Activated T-helper 2 cell treated with anti-CD3 and anti-CD28 coated beads, Interferon-gamma antibody, Interleukin-2, Interleukin-4, amounts not matched to agents 10 μg/mL and 5 μg/mL and 100 μg/mL, durations not matched to agents 14 hours and 24 hours and 36 hours (primary cell): ENCODE measurements at regions of chr19 and their contacts with region 1.

Region 1: DNA sequence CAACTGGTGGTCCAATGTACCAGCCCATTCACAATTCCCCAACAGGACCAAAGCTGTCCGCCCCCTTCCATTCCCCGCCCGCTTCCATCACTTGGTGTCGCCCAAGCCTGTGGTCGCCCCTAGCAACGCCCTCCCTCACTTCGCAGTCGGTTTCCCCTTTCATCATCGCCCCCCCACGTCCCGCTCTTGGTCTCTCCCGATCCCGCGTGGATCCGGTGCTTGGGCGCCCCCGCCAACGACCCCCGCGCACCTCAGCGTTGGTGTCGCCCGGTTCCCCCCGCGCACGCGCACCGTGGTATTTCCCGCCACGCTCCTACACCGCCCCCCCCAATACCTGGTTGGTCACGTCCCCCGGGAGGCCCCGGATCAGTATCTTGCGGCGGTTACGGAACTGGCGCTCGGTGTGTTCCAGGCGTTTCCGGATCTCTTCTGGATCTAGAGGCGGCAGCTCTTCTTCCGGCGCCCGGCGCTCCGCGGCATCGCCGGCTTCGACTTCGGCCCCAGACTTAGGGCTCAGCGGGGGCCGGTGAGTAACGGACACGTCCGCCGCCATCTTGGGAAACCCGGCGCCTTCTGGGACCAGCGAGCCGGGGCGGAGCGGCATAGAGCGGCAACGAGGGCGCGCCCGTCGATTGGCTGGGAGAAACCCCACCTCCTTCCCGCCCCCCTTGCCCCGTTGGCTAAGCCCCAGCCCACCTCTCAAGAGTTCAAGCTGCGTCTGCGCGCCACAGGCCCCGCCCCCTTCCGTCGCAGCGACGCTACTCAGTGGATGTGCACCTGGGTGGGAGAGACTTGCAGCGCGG is at the start of gene RAVER1:
- DNase-seq: peak; percentile 95
- H3K4me3 Mint-ChIP-seq: peak within 1 kb of the TSS; percentile 90
- H3K27ac Mint-ChIP-seq: peak within 1 kb of the TSS; percentile 94
- H3K4me1 Mint-ChIP-seq: peaks cover 12% of the 10 kb centered on the region
- H3K27me3 Mint-ChIP-seq: no peaks in the 10 kb centered on the region
- total RNA-seq, gene RAVER1: 90.3 and 91.1 TPM in 2 replicates

Region 2: GRCh38 chr19:10206226-10206885 is 126.8 kb before region 1 on chr19:
- intact Hi-C with region 1: no loop called
- DNase-seq: no peak
- H3K4me3 Mint-ChIP-seq: no peak overlapping the region
- H3K27ac Mint-ChIP-seq: no peak overlapping the region
- H3K4me1 Mint-ChIP-seq: peaks cover 2% of the 10 kb centered on the region
- H3K27me3 Mint-ChIP-seq: peaks cover 2% of the 10 kb centered on the region

Region 3: GRCh38 chr19:10245189-10245939 is 87.8 kb before region 1 on chr19:
- intact Hi-C with region 1: no loop called
- DNase-seq: no peak
- H3K4me3 Mint-ChIP-seq: no peak overlapping the region
- H3K27ac Mint-ChIP-seq: no peak overlapping the region
- H3K4me1 Mint-ChIP-seq: no peaks in the 10 kb centered on the region
- H3K27me3 Mint-ChIP-seq: no peaks in the 10 kb centered on the region

Region 4: GRCh38 chr19:10269333-10270179 is 63.6 kb before region 1 on chr19:
- intact Hi-C with region 1: loop called (anchors 2 kb)
- DNase-seq: peak; percentile 84
- H3K4me3 Mint-ChIP-seq: peak overlapping the region; percentile 87
- H3K27ac Mint-ChIP-seq: peak overlapping the region; percentile 94
- H3K4me1 Mint-ChIP-seq: peaks cover 17% of the 10 kb centered on the region
- H3K27me3 Mint-ChIP-seq: no peaks in the 10 kb centered on the region

Region 5: DNA sequence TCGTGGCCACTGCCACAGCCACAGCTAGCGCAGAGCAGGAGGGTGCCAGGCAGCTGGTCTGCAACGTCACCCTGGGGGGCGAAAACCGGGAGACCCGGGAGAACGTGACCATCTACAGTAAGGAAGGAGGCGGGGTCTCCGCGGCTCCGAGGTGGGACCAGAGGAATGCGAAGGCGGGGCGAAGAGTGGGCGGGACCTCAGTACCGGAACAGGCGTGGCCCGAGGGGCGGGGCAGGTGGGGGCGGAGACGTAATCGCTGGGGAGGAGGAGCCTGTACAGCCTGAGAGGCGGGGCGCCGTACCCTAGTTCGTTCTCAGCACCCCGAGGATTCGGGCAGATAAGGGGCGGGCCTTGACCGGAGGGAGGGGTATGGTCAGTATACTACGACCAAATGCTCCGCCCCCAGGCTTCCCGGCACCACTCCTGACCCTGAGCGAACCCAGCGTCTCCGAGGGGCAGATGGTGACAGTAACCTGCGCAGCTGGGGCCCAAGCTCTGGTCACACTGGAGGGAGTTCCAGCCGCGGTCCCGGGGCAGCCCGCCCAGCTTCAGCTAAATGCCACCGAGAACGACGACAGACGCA is 40.9 kb before region 1 on chr19:
- intact Hi-C with region 1: loop called (anchors 5 kb)
- DNase-seq: peak; percentile 72
- H3K4me3 Mint-ChIP-seq: peak overlapping the region; percentile 79
- H3K27ac Mint-ChIP-seq: no peak overlapping the region
- H3K4me1 Mint-ChIP-seq: peaks cover 53% of the 10 kb centered on the region
- H3K27me3 Mint-ChIP-seq: peaks cover 60% of the 10 kb centered on the region

Region 6: GRCh38 chr19:10315335-10316214 is 17.6 kb before region 1 on chr19 and contains the start of gene FDX2:
- intact Hi-C with region 1: loop called (anchors 2 kb)
- DNase-seq: peak; percentile 87
- H3K4me3 Mint-ChIP-seq: peak within 1 kb of the TSS; percentile 90
- H3K27ac Mint-ChIP-seq: peak within 1 kb of the TSS; percentile 70
- H3K4me1 Mint-ChIP-seq: peaks cover 10% of the 10 kb centered on the region
- H3K27me3 Mint-ChIP-seq: no peaks in the 10 kb centered on the region
- total RNA-seq, gene FDX2: 16.8 and 18.0 TPM in 2 replicates

Region 7: GRCh38 chr19:10353793-10354391 is 20.7 kb after region 1 on chr19:
- intact Hi-C with region 1: no loop called
- DNase-seq: peak; percentile 30
- H3K4me3 Mint-ChIP-seq: no peak overlapping the region
- H3K27ac Mint-ChIP-seq: no peak overlapping the region
- H3K4me1 Mint-ChIP-seq: no peaks in the 10 kb centered on the region
- H3K27me3 Mint-ChIP-seq: no peaks in the 10 kb centered on the region

Region 8: GRCh38 chr19:10380313-10381102 is 47.4 kb after region 1 on chr19 and contains the start of gene TYK2:
- intact Hi-C with region 1: loop called (anchors 5 kb)
- DNase-seq: peak; percentile 98
- H3K4me3 Mint-ChIP-seq: peak within 1 kb of the TSS; percentile 88
- H3K27ac Mint-ChIP-seq: peak within 1 kb of the TSS; percentile 88
- H3K4me1 Mint-ChIP-seq: peaks cover 16% of the 10 kb centered on the region
- H3K27me3 Mint-ChIP-seq: no peaks in the 10 kb centered on the region
- total RNA-seq, gene TYK2: 250 TPM in 2 replicates